Tibial artery (tissue), 4 donors: ENCODE measurements at regions of chr7 and their contacts with region 1.

Region 1: GRCh38 chr7:151626422-151627115 is 106.9 kb upstream of the RHEB start:
- DNase-seq: no peak
- H3K4me3 ChIP-seq: no peak overlapping the region
- H3K27ac ChIP-seq: no peak overlapping the region
- H3K4me1 ChIP-seq: peaks cover 0 to 73% (median 40%) of the 10 kb centered on the region in 4 donors
- H3K27me3 ChIP-seq: no peaks in the 10 kb centered on the region
- CTCF ChIP-seq: peak; percentile 40 to 43

Region 2: GRCh38 chr7:150388709-150389531 is 1237.6 kb before region 1 on chr7:
- intact Hi-C with region 1: no loop called
- DNase-seq: peak; percentile 48 to 82
- H3K4me3 ChIP-seq: no peak overlapping the region
- H3K27ac ChIP-seq: no peak overlapping the region
- H3K4me1 ChIP-seq: peaks cover 0 to 13% (median 3%) of the 10 kb centered on the region in 4 donors
- H3K27me3 ChIP-seq: no peaks in the 10 kb centered on the region
- CTCF ChIP-seq: peak; percentile 74 to 78

Region 3: GRCh38 chr7:151210087-151210854 is 416.3 kb before region 1 on chr7 and contains the start of gene H2BK1:
- intact Hi-C with region 1: no loop called
- DNase-seq: no peak
- H3K4me3 ChIP-seq: no peak within 1 kb of the TSS
- H3K27ac ChIP-seq: no peak within 1 kb of the TSS
- H3K4me1 ChIP-seq: no peaks in the 10 kb centered on the region
- H3K27me3 ChIP-seq: peaks cover 0 to 9% of the 10 kb centered on the region in 2 donors
- CTCF ChIP-seq: no peak

Region 4: GRCh38 chr7:151705636-151706276 is 79.2 kb after region 1 on chr7:
- intact Hi-C with region 1: loop called (anchors 5 kb)
- DNase-seq: no peak
- H3K4me3 ChIP-seq: peak overlapping the region; percentile 21 to 32
- H3K27ac ChIP-seq: peak overlapping the region in 1 of 2 donors; percentile 50
- H3K4me1 ChIP-seq: peaks cover 0 to 14% (median 7%) of the 10 kb centered on the region in 4 donors
- H3K27me3 ChIP-seq: no peaks in the 10 kb centered on the region
- CTCF ChIP-seq: peak; percentile 47 to 54